HEK293 (cell line): ENCODE measurements at regions of chr17 and their contacts with region 1.

Region 1: GRCh38 chr17:45148183-45149036 is at the start of gene HEXIM1:
- H3K4me3 ChIP-seq: peak within 1 kb of the TSS; percentile 72
- H3K27ac ChIP-seq: peak within 1 kb of the TSS; percentile 92
- H3K4me1 ChIP-seq: peaks cover 10% of the 10 kb centered on the region; the same call in 1 of the 2 replicates
- CTCF ChIP-seq: peak; percentile 40; the same call in 1 of the 2 replicates

Region 2: DNA sequence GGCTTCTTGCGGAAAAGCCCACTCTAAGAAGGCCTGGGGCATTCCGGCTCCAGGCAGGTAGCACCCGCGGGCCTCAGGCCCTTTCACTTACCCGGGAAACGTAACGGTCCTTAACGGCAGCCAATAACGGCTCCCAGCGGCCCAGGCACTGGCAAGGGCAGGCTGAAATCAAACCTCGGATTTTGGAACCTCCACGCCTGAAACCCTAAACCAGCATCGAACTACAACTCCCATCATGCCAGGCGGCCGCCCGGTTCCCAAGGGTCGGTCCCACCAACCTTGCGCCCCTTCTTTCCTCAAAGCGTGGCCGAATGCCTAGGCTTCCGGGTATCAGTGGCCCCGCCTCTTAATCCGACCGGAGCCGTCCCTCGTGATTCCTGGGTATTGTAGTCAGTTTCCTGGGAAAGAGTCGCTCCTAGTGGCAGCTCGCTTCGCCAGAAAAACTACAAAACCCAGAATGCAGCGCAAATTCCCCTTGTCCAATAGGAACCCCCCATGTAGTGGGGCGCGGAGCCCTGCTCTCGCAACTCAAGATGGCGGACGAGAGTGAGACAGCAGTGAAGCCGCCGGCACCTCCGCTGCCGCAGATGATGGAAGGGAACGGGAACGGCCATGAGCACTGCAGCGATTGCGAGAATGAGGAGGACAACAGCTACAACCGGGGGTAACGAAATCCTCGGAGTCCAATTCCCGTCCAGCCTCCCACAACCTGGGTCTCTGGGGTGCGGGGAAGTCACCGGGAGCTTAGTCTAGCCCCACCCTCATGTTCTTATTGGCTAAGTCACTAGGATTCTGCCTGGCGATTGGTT is 87.4 kb before region 1 on chr17 and contains the start of gene NMT1:
- CTCF ChIA-PET with region 1: no interaction called
- POLR2A ChIA-PET with region 1: interaction called, 27 read pairs
- H3K4me3 ChIP-seq: peak within 1 kb of the TSS; percentile 93
- H3K27ac ChIP-seq: peak within 1 kb of the TSS; percentile 82
- H3K4me1 ChIP-seq: peaks cover 13% of the 10 kb centered on the region
- CTCF ChIP-seq: no peak

Region 3: GRCh38 chr17:45161019-45161825 is 12.8 kb after region 1 on chr17:
- CTCF ChIA-PET with region 1: interaction called, 113 read pairs
- POLR2A ChIA-PET with region 1: interaction called, 700 read pairs
- H3K4me3 ChIP-seq: peak overlapping the region; percentile 97
- H3K27ac ChIP-seq: peak overlapping the region; percentile 92
- H3K4me1 ChIP-seq: peaks cover 15% of the 10 kb centered on the region
- CTCF ChIP-seq: no peak

Region 4: DNA sequence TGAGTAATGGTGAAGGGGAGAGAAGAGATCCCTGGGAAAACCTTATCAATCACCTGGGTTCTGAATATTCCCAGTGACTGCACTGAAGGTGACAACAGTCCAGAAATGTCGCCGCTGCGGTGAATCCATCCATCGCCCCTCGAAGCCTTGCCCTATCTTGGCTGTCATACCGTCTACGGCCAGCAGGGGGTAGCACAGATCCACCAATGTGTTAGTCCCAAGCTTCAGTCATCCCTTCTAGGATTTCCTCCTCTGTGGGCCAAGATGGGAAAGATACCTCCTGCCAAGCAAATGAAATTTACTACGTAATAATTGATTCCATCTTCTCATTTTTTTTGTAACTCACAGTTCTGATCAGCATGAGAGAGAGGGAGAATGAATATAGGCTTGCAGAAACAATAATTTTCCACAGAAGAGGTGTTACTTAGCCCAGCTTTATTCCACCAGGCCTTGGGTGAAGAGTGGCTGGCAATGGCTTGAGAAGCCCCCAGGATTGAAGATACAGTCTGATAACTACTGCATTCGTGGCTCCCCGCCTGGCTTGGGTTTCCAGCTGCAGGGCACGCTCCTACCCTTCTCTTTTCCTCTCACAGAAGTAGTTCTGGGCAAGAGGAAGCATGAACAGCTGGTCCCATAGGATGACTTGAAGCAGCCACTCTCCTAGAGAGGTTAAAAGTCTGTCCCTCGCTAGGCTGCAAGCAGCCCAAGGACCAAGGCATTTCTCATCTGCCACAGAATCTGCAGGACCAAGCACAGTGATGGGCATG is 70.7 kb after region 1 on chr17:
- CTCF ChIA-PET with region 1: interaction called, 30 read pairs
- POLR2A ChIA-PET with region 1: interaction called, 8 read pairs
- H3K4me3 ChIP-seq: no peak overlapping the region
- H3K27ac ChIP-seq: no peak overlapping the region
- H3K4me1 ChIP-seq: no peaks in the 10 kb centered on the region; the same call in 1 of the 2 replicates
- CTCF ChIP-seq: peak; percentile 83

Region 5: DNA sequence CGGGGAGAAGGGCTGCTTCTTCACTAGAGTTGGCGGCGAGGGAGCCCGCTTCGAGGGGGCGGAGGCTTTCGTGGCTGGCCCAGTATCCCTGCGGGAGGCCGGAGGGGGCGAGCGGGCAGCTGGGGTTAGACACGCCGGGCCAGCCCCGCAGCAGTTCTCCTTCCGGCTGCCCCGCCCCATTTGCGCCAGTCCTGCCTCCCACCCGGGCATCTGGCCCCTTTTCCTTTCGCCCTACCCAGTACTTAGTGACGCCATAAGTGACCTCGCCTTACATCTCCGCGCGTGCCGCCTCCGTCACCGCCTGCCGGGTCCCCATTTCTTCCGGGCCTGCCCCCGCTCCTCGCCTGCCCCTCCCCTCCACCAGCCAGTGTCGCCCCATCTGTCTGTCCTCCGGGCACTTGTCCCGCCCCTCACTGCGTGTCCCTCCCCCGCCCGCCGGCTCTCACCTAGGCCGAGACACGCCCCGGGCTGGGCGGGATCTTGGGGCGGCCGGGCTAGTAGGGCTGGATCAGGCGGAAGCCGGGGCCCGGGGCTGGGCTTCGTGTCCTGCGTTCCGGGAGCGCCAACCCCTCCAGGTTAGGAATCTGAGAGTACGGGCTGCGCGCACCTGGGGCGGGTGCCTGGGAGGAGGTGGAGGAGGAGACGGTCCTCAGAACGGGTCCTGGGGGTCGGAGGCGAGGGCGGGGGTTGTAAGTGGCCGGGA is 99.2 kb after region 1 on chr17:
- CTCF ChIA-PET with region 1: no interaction called
- POLR2A ChIA-PET with region 1: interaction called, 15 read pairs
- H3K4me3 ChIP-seq: peak overlapping the region; percentile 67
- H3K27ac ChIP-seq: peak overlapping the region; percentile 80
- H3K4me1 ChIP-seq: peaks cover 2% of the 10 kb centered on the region
- CTCF ChIP-seq: no peak; the same call in 1 of the 2 replicates